ENCODE measurements at regions of chr17 and their contacts with region 1.

Region 1: GRCh38 chr17:59155439-59156182 is at the start of gene PRR11:
- DNase-seq: peak; percentile 94 to 98
- H3K4me3 ChIP-seq: peak within 1 kb of the TSS; percentile 89 to 92
- H3K27ac ChIP-seq: peak within 1 kb of the TSS; percentile 84 to 87
- H3K4me1 ChIP-seq: peaks cover 0 to 22% of the 10 kb centered on the region in 2 donors
- H3K27me3 ChIP-seq: no peaks in the 10 kb centered on the region
- CTCF ChIP-seq: no peak
- total RNA-seq, gene PRR11: 0.11 TPM

Region 2: DNA sequence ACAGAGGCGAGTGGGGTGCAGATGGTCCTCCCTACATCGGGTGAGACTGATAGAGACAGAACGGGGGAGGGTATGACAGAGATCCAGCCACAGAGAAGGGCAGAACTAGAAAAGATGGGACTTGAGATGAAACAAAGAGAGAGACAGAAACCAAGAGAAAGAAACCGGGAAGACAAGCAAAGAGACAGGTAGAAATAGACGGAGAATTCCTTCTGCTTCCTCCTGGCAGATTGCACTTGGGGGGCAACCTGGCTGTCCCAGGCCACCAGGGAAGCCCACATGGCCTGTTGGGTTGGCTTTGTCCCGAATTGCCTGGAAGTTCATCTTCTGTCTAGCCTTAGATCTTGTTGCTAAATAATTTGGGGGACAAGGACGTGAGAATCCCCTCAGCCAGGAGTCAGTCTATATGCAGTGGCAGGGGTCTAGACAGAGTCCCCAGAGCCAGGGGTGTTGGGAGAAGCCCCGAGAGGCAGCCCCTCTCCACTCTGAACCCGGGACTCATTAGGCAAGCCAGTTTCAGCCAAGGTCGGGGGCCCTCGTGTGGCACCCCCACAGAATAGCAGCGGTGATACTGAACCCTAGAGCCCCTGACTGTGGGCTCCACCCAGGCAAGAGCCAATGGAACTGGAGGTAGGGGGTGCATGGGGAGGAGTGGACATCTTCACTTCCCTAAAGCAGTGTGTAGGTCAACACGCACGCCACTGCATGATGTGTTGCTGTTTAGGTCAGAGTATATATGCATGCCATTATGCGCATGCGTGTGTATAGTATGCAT is 826.4 kb before region 1 on chr17:
- intact Hi-C with region 1: no loop called
- DNase-seq: peak in 1 of 2 donors; percentile 40
- H3K4me3 ChIP-seq: no peak overlapping the region
- H3K27ac ChIP-seq: no peak overlapping the region
- H3K4me1 ChIP-seq: peaks cover 0 to 2% of the 10 kb centered on the region in 2 donors
- H3K27me3 ChIP-seq: no peaks in the 10 kb centered on the region
- CTCF ChIP-seq: no peak

Region 3: GRCh38 chr17:59097876-59098275 is 57.7 kb before region 1 on chr17:
- intact Hi-C with region 1: loop called (anchors 2 kb)
- DNase-seq: no peak
- H3K4me3 ChIP-seq: no peak overlapping the region
- H3K27ac ChIP-seq: no peak overlapping the region
- H3K4me1 ChIP-seq: peaks cover 0 to 14% of the 10 kb centered on the region in 2 donors
- H3K27me3 ChIP-seq: no peaks in the 10 kb centered on the region
- CTCF ChIP-seq: no peak

Region 4: DNA sequence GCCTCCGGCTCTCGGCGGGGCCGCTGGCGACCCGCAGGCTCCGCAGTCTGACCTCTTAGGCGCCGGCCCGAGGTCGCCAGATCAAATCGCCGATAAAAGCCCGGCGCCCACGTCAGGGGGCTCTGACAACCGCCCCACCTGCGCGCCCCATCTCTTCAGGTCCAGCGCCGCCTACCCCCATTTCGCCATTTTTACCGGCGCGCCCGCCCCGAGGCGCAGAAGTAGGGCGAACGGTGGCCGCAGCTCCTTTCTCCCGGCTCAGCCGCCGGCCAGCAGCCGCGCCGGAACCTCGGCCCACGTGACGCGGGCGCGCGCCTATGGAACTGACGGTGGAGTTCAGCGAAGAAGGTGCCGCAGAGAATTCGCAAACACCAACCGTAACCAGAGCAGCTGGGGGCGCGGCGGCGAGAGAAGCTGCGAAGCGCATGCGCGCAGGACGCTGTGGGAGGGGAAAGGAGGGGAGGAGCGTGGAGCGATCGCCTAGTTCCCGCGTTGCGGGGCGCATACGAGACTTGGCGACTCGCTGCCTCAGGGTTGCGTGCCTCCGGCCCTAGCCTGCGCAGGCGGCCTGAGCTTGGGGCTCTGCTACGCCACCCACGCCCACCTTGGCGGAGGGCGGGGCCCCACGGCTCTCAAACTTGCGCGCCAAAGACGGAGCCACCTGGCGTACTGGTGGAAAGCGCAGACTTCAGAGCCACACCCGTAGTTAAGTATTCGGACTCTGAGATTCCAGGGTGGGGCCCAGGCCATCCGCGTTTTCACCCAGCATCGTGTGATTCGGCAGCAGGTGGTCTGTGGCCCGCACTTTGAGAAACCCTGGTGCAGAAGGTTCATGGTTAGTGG is 48.9 kb before region 1 on chr17 and contains the start of gene TRIM37:
- intact Hi-C with region 1: loop called (anchors 1 kb)
- DNase-seq: peak; percentile 84 to 98
- H3K4me3 ChIP-seq: peak within 1 kb of the TSS; percentile 78 to 95
- H3K27ac ChIP-seq: peak within 1 kb of the TSS; percentile 87 to 89
- H3K4me1 ChIP-seq: peaks cover 4 to 13% of the 10 kb centered on the region in 2 donors
- H3K27me3 ChIP-seq: no peaks in the 10 kb centered on the region
- CTCF ChIP-seq: peak in 1 of 3 experiments; percentile 6
- total RNA-seq, gene TRIM37: 15.0 TPM

Region 5: DNA sequence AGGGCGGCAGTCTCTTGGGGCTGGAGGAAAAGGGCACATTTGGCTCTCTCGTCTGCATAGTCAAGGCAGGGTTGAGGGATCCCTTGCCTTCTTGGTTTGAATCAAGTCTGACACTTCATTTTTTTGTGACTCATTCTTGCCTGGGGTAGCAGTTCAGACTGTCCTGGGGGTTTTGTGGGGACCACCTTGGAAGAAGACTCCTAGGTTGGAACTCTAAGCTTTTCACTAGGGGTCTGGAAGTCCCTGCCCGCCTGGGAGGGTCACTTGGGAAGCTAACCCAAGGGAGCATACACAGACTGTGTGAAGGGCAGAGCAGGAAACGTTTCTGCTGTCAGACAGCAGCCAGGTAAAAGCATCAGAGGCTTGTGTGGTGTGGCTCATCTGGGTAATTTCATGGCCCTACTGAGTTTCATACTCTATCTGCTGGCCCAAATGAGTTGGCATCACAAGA is 187.1 kb after region 1 on chr17:
- intact Hi-C with region 1: no loop called
- DNase-seq: no peak
- H3K4me3 ChIP-seq: no peak overlapping the region
- H3K27ac ChIP-seq: peak overlapping the region; percentile 6 to 49
- H3K4me1 ChIP-seq: peaks cover 12 to 76% of the 10 kb centered on the region in 2 donors
- H3K27me3 ChIP-seq: no peaks in the 10 kb centered on the region
- CTCF ChIP-seq: no peak

Measured in ascending aorta (tissue), 2 donors.